Activated B cell treated with CpG ODN at 0.5 μM for 24 hours (primary cell): ENCODE measurements at regions of chr19 and their contacts with region 1.

Region 1: GRCh38 chr19:11050323-11051114 is 38.7 kb upstream of the LDLR start:
- DNase-seq: no peak
- ATAC-seq: no peak
- H3K4me3 Mint-ChIP-seq: no peak overlapping the region
- H3K27ac Mint-ChIP-seq: no peak overlapping the region
- H3K4me1 Mint-ChIP-seq: peaks cover 83% of the 10 kb centered on the region
- H3K27me3 Mint-ChIP-seq: peaks cover 8% of the 10 kb centered on the region
- CTCF ChIP-seq: no peak

Region 2: GRCh38 chr19:11067356-11068113 is 17.0 kb after region 1 on chr19:
- CTCF ChIA-PET with region 1: no interaction called
- POLR2A ChIA-PET with region 1: interaction called, 10 read pairs
- intact Hi-C with region 1: no loop called
- DNase-seq: no peak
- ATAC-seq: no peak
- H3K4me3 Mint-ChIP-seq: no peak overlapping the region
- H3K27ac Mint-ChIP-seq: no peak overlapping the region
- H3K4me1 Mint-ChIP-seq: no peaks in the 10 kb centered on the region
- H3K27me3 Mint-ChIP-seq: peaks cover 2% of the 10 kb centered on the region
- CTCF ChIP-seq: no peak

Region 3: GRCh38 chr19:11090054-11090900 is 39.8 kb after region 1 on chr19:
- CTCF ChIA-PET with region 1: interaction called, 3 read pairs
- POLR2A ChIA-PET with region 1: interaction called, 6 read pairs
- intact Hi-C with region 1: loop called (anchors 1 kb)
- DNase-seq: peak; percentile 71
- ATAC-seq: peak; percentile 87
- H3K4me3 Mint-ChIP-seq: peak overlapping the region; percentile 78
- H3K27ac Mint-ChIP-seq: peak overlapping the region; percentile 30
- H3K4me1 Mint-ChIP-seq: peaks cover 41% of the 10 kb centered on the region
- H3K27me3 Mint-ChIP-seq: peaks cover 15% of the 10 kb centered on the region
- CTCF ChIP-seq: no peak